ENCODE measurements at regions of chr14 and their contacts with region 1.

Region 1: GRCh38 chr14:93115069-93115820 is 480 bp downstream of the ITPK1 start:
- DNase-seq: peak; percentile 75
- ATAC-seq: peak; percentile 73
- H3K4me3 Mint-ChIP-seq: peak overlapping the region; percentile 86
- H3K27ac Mint-ChIP-seq: no peak overlapping the region
- H3K4me1 Mint-ChIP-seq: peaks cover 40% of the 10 kb centered on the region
- H3K27me3 Mint-ChIP-seq: no peaks in the 10 kb centered on the region; the same call in 1 of the 2 replicates
- CTCF ChIP-seq: no peak

Region 2: DNA sequence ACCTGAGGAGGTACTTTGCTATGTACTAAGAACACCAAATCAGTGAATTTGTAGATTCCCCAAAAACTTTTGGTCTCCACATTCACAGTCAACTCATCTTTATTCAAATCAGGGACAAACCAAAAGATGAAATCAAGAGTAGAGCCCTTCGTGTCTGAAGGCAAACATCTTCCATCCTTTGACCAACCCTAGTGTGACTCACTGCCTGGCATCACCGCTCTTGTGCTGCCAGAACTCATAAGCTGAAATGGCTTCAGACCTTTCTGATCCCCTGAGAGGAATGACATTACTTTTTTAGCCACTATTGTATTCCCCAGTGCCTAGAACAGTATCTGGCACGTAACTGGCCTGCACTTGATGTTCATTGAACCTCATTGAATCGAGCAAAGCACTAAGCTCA is 271.0 kb before region 1 on chr14:
- CTCF ChIA-PET with region 1: no interaction called
- POLR2A ChIA-PET with region 1: no interaction called
- DNase-seq: no peak
- ATAC-seq: no peak
- H3K4me3 Mint-ChIP-seq: no peak overlapping the region
- H3K27ac Mint-ChIP-seq: no peak overlapping the region
- H3K4me1 Mint-ChIP-seq: no peaks in the 10 kb centered on the region
- H3K27me3 Mint-ChIP-seq: no peaks in the 10 kb centered on the region
- CTCF ChIP-seq: no peak

Region 3: GRCh38 chr14:92897922-92898565 is 217.2 kb before region 1 on chr14:
- CTCF ChIA-PET with region 1: no interaction called
- POLR2A ChIA-PET with region 1: no interaction called
- DNase-seq: no peak
- ATAC-seq: no peak
- H3K4me3 Mint-ChIP-seq: no peak overlapping the region
- H3K27ac Mint-ChIP-seq: no peak overlapping the region
- H3K4me1 Mint-ChIP-seq: peaks cover 13% of the 10 kb centered on the region
- H3K27me3 Mint-ChIP-seq: peaks cover 21% of the 10 kb centered on the region
- CTCF ChIP-seq: no peak

Region 4: DNA sequence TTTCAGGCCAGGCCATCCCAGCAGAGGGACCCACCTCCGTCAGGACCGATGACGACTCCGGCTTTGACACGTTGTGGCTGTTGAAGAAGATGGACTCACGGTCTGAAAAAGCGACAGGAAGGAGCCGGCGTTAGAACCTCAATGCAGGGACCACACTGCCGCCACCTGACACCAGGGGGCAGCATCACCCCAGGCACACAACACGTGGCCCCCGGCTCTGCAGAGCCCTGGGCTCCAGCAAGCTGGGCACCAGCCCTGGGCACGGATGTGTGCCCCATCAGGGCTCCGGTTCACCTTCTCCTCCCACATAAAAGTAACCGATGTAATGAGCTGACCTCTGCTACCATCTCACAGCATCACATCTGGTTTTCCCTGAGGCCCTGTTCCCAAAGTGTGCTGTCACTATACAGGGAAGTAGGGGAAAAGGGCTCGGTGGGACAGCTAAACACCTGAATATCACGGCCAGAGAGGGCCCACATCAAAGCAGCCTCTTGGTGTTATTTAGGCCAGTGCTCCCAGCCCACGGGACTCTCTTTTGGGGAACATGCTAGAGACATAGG is 163.3 kb before region 1 on chr14:
- CTCF ChIA-PET with region 1: interaction called, 33 read pairs
- POLR2A ChIA-PET with region 1: no interaction called
- DNase-seq: peak; percentile 84
- ATAC-seq: peak; percentile 91
- H3K4me3 Mint-ChIP-seq: no peak overlapping the region
- H3K27ac Mint-ChIP-seq: peak overlapping the region; percentile 39; the same call in 1 of the 2 replicates
- H3K4me1 Mint-ChIP-seq: peaks cover 11% of the 10 kb centered on the region
- H3K27me3 Mint-ChIP-seq: no peaks in the 10 kb centered on the region
- CTCF ChIP-seq: peak; percentile 97

Region 5: GRCh38 chr14:93040443-93040842 is 74.8 kb before region 1 on chr14:
- CTCF ChIA-PET with region 1: interaction called, 18 read pairs
- POLR2A ChIA-PET with region 1: no interaction called
- DNase-seq: no peak
- ATAC-seq: 0 out of 2 replicates have a peak, but pooled peaks have one; percentile 1
- H3K4me3 Mint-ChIP-seq: no peak overlapping the region
- H3K27ac Mint-ChIP-seq: peak overlapping the region; percentile 73; the same call in 1 of the 2 replicates
- H3K4me1 Mint-ChIP-seq: peaks cover 87% of the 10 kb centered on the region
- H3K27me3 Mint-ChIP-seq: no peaks in the 10 kb centered on the region
- CTCF ChIP-seq: no peak

Region 6: DNA sequence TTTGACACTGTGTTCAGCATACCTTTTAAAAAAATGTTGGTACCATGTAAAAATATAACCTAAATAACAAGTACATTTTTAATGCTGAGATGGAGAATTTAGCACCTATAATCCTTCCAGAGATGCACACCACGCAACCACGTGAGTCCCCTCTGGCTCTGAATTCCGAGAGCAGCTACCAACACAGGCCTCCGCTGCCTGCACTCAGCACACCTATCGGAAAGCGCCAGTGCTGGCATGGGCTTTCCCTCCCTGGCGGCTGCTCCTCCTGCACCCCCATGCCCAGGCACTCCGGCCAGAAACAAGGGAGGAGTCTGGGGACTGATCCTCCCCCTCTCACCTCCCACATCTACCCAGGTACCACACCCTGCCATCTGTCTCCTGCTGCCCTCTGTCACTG is 46.5 kb before region 1 on chr14:
- CTCF ChIA-PET with region 1: interaction called, 12 read pairs
- POLR2A ChIA-PET with region 1: no interaction called
- DNase-seq: no peak
- ATAC-seq: no peak
- H3K4me3 Mint-ChIP-seq: no peak overlapping the region
- H3K27ac Mint-ChIP-seq: no peak overlapping the region
- H3K4me1 Mint-ChIP-seq: peaks cover 26% of the 10 kb centered on the region
- H3K27me3 Mint-ChIP-seq: no peaks in the 10 kb centered on the region
- CTCF ChIP-seq: no peak

Region 7: DNA sequence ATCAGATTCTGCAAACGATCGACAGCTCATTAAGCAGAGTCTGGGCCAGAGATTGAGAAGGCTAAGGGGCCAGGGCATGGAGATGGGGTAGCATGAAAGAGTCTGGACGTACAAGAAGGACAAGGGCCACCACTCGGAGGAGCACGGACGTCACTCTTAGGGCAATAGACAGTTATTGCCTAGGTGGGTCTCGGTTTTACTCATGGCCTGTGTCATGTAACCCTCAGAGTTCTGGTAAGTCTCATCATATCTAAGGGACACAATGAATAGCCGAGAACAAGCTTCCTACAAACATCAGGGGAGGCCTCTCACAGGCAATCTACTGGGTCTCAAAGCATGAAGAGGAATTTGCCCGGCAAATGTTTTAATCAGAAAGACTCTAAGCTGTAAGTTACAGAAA is 30.9 kb after region 1 on chr14:
- CTCF ChIA-PET with region 1: interaction called, 13 read pairs
- POLR2A ChIA-PET with region 1: no interaction called
- DNase-seq: no peak
- ATAC-seq: no peak
- H3K4me3 Mint-ChIP-seq: no peak overlapping the region
- H3K27ac Mint-ChIP-seq: no peak overlapping the region
- H3K4me1 Mint-ChIP-seq: 0 out of 2 replicates have a peak, but pooled peaks cover 3% of the 10 kb centered on the region
- H3K27me3 Mint-ChIP-seq: no peaks in the 10 kb centered on the region
- CTCF ChIP-seq: no peak

Region 8: DNA sequence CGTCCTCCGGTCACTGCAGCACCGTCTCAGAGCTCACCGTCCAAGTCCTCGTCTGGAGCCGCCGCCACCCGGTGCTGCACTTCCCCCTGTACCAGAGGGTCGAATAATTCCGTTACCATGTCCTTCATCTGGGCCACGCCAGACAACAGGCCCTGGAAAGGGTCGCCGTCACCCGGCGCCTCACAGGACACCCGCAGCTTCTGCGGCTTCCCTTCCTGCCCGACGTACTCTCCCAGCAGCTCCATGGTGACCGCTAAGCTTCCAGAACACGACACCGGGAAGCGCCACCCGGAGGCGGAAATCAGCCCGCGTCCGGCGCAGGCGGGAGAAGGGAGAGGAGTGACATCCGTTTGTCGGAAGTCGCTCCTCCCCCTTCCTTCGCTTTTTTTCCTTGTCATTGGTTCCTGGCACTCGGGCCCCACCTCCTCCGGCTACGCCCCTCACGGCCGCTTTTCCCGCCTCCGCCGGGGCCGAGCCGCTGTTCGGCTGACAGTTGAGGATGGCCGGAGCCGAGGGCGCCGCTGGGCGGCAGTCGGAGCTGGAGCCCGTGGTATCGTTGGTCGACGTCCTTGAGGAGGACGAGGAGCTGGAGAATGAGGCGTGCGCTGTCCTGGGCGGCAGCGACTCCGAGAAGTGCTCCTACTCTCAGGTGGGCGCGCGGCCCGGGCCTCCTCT is 91.7 kb after region 1 on chr14 and contains the starts of genes GON7 and UBR7:
- CTCF ChIA-PET with region 1: interaction called, 25 read pairs
- POLR2A ChIA-PET with region 1: interaction called, 9 read pairs
- DNase-seq: peak; percentile 97
- ATAC-seq: peak; percentile 92
- H3K4me3 Mint-ChIP-seq: peak within 1 kb of the TSS; percentile 99
- H3K27ac Mint-ChIP-seq: peak within 1 kb of the TSS; percentile 99
- H3K4me1 Mint-ChIP-seq: peaks cover 14% of the 10 kb centered on the region
- H3K27me3 Mint-ChIP-seq: no peaks in the 10 kb centered on the region
- CTCF ChIP-seq: no peak
- total RNA-seq, gene GON7: 7.1 to 8.0 TPM (median 7.4 TPM) in 3 replicates
- total RNA-seq, gene UBR7: 21.1 to 28.9 TPM (median 24.0 TPM) in 3 replicates

Region 9: DNA sequence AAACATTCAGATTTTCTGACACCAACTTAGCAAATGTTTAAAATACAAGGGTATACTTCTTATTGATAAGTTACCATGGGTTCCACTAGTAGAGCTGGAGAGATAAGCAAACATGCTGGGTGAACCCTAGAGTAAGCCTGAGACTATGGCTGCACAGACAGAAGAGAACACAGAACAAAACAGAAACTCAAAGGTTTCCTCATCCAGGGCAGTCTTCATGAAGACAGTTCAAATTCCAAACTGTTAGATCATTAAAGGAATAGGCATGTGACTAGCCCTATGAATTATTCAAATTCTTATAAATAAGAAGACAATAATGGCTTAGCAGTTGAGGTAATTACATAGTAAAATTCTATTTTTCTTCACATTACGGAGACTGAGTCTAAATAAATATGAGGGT is 189.5 kb after region 1 on chr14:
- CTCF ChIA-PET with region 1: no interaction called
- POLR2A ChIA-PET with region 1: no interaction called
- DNase-seq: no peak
- ATAC-seq: no peak
- H3K4me3 Mint-ChIP-seq: no peak overlapping the region
- H3K27ac Mint-ChIP-seq: peak overlapping the region; percentile 68; the same call in 1 of the 2 replicates
- H3K4me1 Mint-ChIP-seq: peaks cover 46% of the 10 kb centered on the region
- H3K27me3 Mint-ChIP-seq: no peaks in the 10 kb centered on the region
- CTCF ChIP-seq: no peak

Region 10: GRCh38 chr14:93332853-93333630 is 217.8 kb after region 1 on chr14 and contains the start of gene BTBD7:
- CTCF ChIA-PET with region 1: no interaction called
- POLR2A ChIA-PET with region 1: no interaction called
- DNase-seq: peak; percentile 91
- ATAC-seq: peak; percentile 91
- H3K4me3 Mint-ChIP-seq: peak within 1 kb of the TSS; percentile 89
- H3K27ac Mint-ChIP-seq: peak within 1 kb of the TSS; percentile 87
- H3K4me1 Mint-ChIP-seq: peaks cover 43% of the 10 kb centered on the region
- H3K27me3 Mint-ChIP-seq: no peaks in the 10 kb centered on the region
- CTCF ChIP-seq: no peak
- total RNA-seq, gene BTBD7: 29.2 to 34.1 TPM (median 31.3 TPM) in 3 replicates